Activated CD4-positive, alpha-beta T cell treated with anti-CD3 and anti-CD28 coated beads, Interleukin-2, amount 10 ng/mL, durations not matched to agents 24 days and 14 days (primary cell): ENCODE measurements at regions of chr22 and their contacts with region 1.

Region 1: DNA sequence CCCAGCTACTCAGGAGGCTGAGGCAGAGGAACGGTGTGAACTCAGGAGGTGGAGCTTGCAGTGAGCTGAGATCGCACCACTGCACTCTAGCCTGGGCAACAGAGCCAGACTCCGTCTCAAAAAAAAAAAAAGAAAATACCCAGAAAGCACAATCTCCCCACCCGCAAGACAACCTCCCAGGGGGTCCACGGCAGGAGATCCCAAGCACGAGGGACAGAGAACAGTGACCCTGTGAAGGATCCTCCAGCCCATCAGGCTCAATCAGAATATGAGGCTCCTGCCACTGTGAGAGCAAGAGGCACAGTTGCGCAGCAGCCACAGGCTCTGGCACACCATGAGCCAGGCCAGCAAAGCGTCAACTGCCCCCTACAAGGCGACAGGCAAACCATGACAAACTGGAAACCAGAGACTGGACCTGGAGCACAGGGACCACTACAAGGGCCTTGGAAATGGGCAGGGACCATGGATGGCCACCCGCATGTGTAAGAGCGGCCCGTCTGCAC is 164.8 kb upstream of the GRK3 start:
- DNase-seq: no peak
- H3K4me3 Mint-ChIP-seq: no peak overlapping the region
- H3K27ac Mint-ChIP-seq: no peak overlapping the region
- H3K4me1 Mint-ChIP-seq: peaks cover 38% of the 10 kb centered on the region
- H3K27me3 Mint-ChIP-seq: no peaks in the 10 kb centered on the region

Region 2: DNA sequence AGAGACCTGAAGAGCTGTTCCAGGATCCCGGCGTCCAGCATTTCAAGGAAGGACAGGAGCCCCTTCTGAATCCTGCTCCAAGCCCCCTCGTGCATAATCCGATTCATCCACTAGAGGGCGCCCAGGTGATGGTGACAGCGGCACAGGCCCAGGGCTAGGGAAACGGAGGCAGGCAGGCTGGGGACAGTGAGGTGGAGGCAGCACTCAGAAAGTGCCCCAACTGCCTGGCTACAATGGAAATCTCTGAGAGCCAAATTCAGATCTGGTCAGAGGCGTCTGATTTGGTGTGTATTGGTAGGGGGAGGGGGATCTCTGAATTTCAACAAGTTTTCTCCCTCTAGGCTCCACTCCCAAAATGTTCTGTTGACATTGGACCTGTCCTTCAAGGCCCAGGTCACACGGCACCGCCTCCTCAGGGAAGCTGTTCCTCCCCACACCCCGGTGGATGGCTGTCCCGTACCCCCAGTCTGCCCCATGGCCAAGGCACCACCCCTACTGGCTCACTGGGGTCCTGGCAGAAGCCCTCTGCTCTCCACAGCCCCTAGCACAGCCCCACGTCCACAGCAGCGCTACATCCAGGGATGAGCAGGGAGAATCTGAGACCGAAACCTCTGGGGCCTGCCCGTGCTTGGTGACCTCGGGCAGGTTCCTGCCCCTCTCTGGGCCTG is 37.4 kb before region 1 on chr22:
- intact Hi-C with region 1: loop called (anchors 2 kb)
- DNase-seq: peak; percentile 93
- H3K4me3 Mint-ChIP-seq: no peak overlapping the region
- H3K27ac Mint-ChIP-seq: peak overlapping the region; percentile 28
- H3K4me1 Mint-ChIP-seq: peaks cover 7% of the 10 kb centered on the region
- H3K27me3 Mint-ChIP-seq: no peaks in the 10 kb centered on the region

Region 3: GRCh38 chr22:25669253-25670069 is 269.8 kb after region 1 on chr22:
- intact Hi-C with region 1: no loop called
- DNase-seq: no peak
- H3K4me3 Mint-ChIP-seq: no peak overlapping the region
- H3K27ac Mint-ChIP-seq: peak overlapping the region; percentile 9
- H3K4me1 Mint-ChIP-seq: peaks cover 17% of the 10 kb centered on the region
- H3K27me3 Mint-ChIP-seq: no peaks in the 10 kb centered on the region

Region 4: DNA sequence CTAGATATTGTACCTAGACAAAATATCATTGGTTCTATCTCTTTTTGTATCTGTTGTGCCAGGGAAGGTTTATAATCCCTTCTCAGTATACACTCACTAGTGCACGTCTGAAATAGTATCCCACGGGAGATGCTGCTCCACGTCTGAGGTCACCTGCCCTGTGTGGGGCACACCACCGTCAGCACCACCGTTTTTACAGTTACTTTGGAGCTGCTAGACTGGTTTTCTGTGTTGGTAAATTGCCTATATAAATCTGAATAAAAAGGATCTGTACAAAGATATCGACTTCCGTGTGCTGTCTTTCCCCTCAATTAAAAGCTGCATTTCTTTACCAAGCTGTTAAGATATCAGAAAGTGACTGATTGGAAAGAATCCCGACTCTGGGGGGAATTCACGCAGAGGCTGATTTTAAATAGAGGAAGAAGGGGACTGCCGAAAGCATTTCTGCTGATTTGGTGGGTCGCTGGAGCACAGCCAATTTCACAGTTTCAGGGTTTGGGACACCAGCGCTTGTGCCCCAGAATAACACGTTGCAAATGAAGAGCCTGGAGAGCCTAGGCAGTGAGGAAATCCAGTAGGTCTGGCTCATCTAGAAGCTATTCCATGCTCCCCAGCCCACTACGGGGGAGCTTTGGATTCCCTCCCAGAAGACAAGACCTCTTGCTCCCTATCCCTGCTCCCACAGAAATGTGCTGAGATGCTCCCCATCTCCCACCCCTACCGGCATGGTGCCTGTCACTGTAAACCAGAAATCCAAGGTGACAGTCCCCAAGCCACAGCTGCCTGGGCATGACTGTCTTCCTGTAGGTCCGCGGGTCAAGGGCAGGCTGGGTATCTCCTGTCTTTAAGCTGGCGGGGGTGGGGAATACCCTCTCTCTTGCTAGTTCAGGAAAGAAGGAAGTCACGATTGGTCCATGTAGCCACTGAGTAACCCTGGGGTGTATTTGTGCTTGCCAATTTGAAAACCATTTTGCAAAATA is 329.6 kb after region 1 on chr22:
- intact Hi-C with region 1: no loop called
- DNase-seq: no peak
- H3K4me3 Mint-ChIP-seq: no peak overlapping the region
- H3K27ac Mint-ChIP-seq: peak overlapping the region; percentile 48
- H3K4me1 Mint-ChIP-seq: peaks cover 29% of the 10 kb centered on the region
- H3K27me3 Mint-ChIP-seq: no peaks in the 10 kb centered on the region